ENCODE measurements at regions of chr2 and their contacts with region 1.

Region 1: DNA sequence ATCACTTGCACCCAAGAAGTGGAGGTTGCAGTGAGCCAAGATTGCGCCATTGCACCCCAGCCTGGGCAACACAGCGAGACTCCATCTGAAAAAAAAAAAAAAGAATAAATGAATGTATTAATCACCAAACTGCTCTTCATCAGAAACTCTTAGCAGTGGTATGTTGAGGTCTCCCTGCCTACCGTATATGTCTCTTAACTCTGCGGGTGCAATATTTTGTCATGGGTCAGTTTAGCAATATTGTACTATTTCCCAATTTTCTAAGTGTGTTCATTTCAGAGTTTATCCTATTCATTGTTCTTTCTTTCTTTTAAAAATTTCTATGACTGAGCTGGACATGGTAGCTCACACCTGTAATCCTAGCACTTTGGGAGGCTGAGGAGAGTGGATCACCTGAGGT is 37.9 kb upstream of the MAP4K3 start:
- DNase-seq: no peak
- ATAC-seq: no peak
- H3K4me3 ChIP-seq: no peak overlapping the region
- H3K27ac ChIP-seq: no peak overlapping the region
- H3K4me1 ChIP-seq: peaks cover 7% of the 10 kb centered on the region
- H3K27me3 ChIP-seq: no peaks in the 10 kb centered on the region
- CTCF ChIP-seq: no peak

Region 2: DNA sequence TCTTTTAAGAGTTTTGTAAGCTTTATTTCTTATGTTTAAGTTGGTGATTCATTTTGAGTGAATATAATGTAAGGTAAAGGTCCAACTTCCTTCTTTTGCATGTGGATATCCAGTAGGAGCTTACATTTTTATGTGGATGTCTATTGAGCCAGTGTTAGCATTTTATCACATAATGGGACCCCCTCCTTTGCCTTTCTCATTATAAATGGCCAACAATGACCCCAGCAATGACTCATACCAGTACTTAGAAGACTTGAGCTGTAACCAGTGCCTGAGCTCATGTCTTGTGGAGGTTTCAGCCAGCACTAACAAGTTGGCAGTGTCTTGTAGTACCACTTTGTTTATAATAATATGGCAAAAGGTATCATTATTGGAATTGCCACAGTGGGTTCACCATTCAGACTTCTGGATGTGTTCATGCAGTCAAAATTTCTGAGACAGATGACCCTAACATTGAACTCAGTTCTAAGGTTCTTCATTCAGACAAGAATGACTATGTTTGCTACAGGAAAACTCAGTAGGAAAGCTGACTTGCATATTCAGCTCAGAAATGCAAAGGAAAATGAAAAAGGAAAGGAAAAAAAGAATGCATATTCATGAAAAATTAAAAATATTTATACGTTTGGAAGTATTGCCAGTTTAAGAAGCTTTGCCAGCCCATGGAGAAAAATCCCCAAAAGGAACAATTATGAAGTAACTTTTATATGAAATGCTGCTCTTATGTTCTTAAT is 272.2 kb before region 1 on chr2:
- CTCF ChIA-PET with region 1: no interaction called
- POLR2A ChIA-PET with region 1: no interaction called
- intact Hi-C with region 1: no loop called
- DNase-seq: peak; percentile 47
- ATAC-seq: peak; percentile 93
- H3K4me3 ChIP-seq: no peak overlapping the region
- H3K27ac ChIP-seq: peak overlapping the region; percentile 20
- H3K4me1 ChIP-seq: peaks cover 15% of the 10 kb centered on the region
- H3K27me3 ChIP-seq: no peaks in the 10 kb centered on the region
- CTCF ChIP-seq: no peak

Region 3: GRCh38 chr2:39642051-39642742 is 167.2 kb after region 1 on chr2:
- CTCF ChIA-PET with region 1: no interaction called
- POLR2A ChIA-PET with region 1: no interaction called
- intact Hi-C with region 1: no loop called
- DNase-seq: peak; percentile 95
- ATAC-seq: peak; percentile 92
- H3K4me3 ChIP-seq: peak overlapping the region; percentile 7; the same call in 1 of the 2 replicates
- H3K27ac ChIP-seq: peak overlapping the region; percentile 72
- H3K4me1 ChIP-seq: peaks cover 59% of the 10 kb centered on the region
- H3K27me3 ChIP-seq: no peaks in the 10 kb centered on the region
- CTCF ChIP-seq: no peak

Region 4: DNA sequence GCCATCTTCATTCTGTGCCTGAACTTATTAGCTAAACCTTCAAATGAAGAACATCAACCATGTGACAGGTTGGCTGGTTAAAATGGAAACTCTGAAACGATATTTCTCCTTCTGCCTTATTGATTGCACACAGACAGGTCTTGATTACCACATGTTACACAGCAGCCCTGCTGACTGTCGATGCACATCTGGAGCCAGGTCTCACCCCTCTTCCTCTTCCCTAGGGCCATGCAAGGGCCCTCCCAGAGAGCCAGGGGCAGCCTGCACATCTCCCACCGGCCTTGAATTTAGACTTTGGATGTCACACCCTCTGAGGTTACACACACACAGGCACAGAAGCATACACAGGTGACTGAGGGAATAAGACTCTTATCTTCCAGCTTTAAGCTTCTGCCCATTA is 235.8 kb after region 1 on chr2:
- CTCF ChIA-PET with region 1: no interaction called
- POLR2A ChIA-PET with region 1: interaction called, 13 read pairs
- intact Hi-C with region 1: no loop called
- DNase-seq: no peak
- ATAC-seq: no peak
- H3K4me3 ChIP-seq: no peak overlapping the region
- H3K27ac ChIP-seq: no peak overlapping the region
- H3K4me1 ChIP-seq: no peaks in the 10 kb centered on the region
- H3K27me3 ChIP-seq: no peaks in the 10 kb centered on the region
- CTCF ChIP-seq: no peak

Measured in PC-3 (cell line).